ENCODE measurements at regions of chr17 and their contacts with region 1.

Region 1: GRCh38 chr17:31202968-31203367 is 94.1 kb downstream of the OMG start:
- DNase-seq: peak; percentile 38
- ATAC-seq: peak; percentile 86
- H3K4me3 ChIP-seq: no peak overlapping the region
- H3K27ac ChIP-seq: no peak overlapping the region
- H3K4me1 ChIP-seq: peaks cover 1% of the 10 kb centered on the region; the same call in 1 of the 2 replicates
- H3K27me3 ChIP-seq: no peaks in the 10 kb centered on the region
- CTCF ChIP-seq: no peak
- POLR2A ChIP-seq: no peak
- RAD21 ChIP-seq: no peak

Region 2: DNA sequence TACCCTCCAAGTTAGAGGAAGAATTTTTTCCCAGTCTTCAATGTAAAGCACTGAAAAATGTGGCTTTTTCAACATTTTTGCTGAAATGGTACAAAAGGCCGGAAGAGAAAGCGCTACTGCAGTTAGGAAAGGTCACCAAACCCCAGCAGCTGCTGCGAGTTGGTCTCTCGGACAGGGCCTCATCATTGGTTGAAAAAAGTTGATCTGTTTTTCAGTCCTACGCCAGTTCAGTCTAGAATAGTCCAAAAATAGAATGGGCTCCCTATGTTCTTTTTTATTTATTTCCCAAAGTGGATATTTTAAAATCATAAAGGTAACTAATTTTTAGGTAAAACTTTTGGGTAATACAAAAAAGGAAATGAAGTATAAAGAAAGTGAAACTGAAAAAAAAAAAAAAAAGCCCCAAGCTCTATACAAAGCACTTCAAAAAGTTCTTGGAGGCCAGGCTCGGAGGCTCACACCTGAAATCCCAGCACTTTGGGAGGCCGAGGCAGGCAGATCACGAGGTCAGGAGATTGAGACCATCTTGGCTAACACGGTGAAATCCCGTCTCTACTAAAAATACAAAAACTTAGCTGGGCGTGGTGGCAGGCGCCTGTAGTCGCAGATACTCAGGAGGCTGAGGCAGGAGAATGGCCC is 263.8 kb before region 1 on chr17:
- CTCF ChIA-PET with region 1: no interaction called
- POLR2A ChIA-PET with region 1: no interaction called
- dilution Hi-C with region 1: no loop called
- in situ Hi-C with region 1: no loop called
- intact Hi-C with region 1: no loop called
- DNase-seq: no peak
- ATAC-seq: no peak
- H3K4me3 ChIP-seq: no peak overlapping the region
- H3K27ac ChIP-seq: no peak overlapping the region
- H3K4me1 ChIP-seq: no peaks in the 10 kb centered on the region; the same call in 1 of the 2 replicates
- H3K27me3 ChIP-seq: no peaks in the 10 kb centered on the region; the same call in 1 of the 2 replicates
- CTCF ChIP-seq: no peak
- POLR2A ChIP-seq: no peak
- RAD21 ChIP-seq: no peak

Region 3: GRCh38 chr17:31094600-31095238 is 108.2 kb before region 1 on chr17 and contains the start of gene NF1:
- CTCF ChIA-PET with region 1: interaction called, 9 read pairs
- POLR2A ChIA-PET with region 1: no interaction called
- dilution Hi-C with region 1: no loop called
- in situ Hi-C with region 1: no loop called
- intact Hi-C with region 1: loop called (anchors 5 kb)
- DNase-seq: peak; percentile 94
- ATAC-seq: peak; percentile 92
- H3K4me3 ChIP-seq: peak within 1 kb of the TSS; percentile 54
- H3K27ac ChIP-seq: peak within 1 kb of the TSS; percentile 95
- H3K4me1 ChIP-seq: no peaks in the 10 kb centered on the region; the same call in 1 of the 2 replicates
- H3K27me3 ChIP-seq: no peaks in the 10 kb centered on the region
- CTCF ChIP-seq: no peak
- POLR2A ChIP-seq: peak; percentile 79
- RAD21 ChIP-seq: peak; percentile 16; the same call in 1 of the 2 replicates
- total RNA-seq, gene NF1: 48.3 and 48.6 TPM in 2 replicates

Region 4: DNA sequence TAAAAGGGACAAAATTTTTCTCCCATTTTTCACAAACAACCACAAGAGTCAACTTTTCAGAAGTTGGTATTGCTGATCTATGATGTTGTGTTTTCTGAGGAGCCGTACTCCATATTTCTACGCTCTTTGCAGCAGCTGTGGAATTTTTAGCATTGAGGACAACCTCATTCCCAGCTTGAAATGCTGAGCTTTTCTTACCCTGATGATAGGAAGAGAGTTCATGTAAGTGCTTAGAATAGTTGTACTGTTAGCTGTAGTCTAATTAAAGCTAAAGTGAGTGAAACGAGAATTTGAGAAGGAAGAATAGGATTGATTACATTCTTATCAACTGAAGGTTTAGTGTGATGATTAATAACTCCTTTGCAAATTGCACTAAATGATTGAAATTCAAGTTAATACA is 35.9 kb before region 1 on chr17:
- CTCF ChIA-PET with region 1: no interaction called
- POLR2A ChIA-PET with region 1: no interaction called
- dilution Hi-C with region 1: no loop called
- in situ Hi-C with region 1: no loop called
- intact Hi-C with region 1: loop called (anchors 5 kb)
- DNase-seq: no peak
- ATAC-seq: no peak
- H3K4me3 ChIP-seq: no peak overlapping the region
- H3K27ac ChIP-seq: no peak overlapping the region
- H3K4me1 ChIP-seq: 0 out of 2 replicates have a peak, but pooled peaks cover 5% of the 10 kb centered on the region
- H3K27me3 ChIP-seq: no peaks in the 10 kb centered on the region
- CTCF ChIP-seq: no peak
- POLR2A ChIP-seq: no peak
- RAD21 ChIP-seq: no peak

Measured in IMR-90 (cell line).